Calu3 (cell line): ENCODE measurements at regions of chr1 and their contacts with region 1.

Region 1: DNA sequence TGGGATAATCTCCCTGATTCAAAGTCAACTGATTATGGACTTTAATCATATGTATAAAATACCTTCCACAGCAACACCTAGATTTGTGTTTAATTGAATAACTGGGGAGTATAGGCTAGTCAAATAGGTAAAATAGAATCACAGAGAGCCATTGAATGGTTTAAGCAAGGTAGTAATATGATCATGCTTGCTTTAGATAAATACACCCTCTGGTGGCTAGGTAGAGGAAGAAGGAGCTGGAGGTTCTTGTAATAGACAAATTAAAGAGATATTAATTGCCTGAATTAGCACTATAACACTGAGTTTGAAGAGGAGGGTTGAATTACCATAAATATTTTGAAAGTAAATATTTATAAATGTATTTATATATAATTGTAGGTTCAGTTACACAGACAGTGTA is 40.3 kb downstream of the DIRAS3 start:
- DNase-seq: no peak
- H3K4me3 Mint-ChIP-seq: no peak overlapping the region
- H3K27ac Mint-ChIP-seq: no peak overlapping the region
- H3K4me1 Mint-ChIP-seq: no peaks in the 10 kb centered on the region
- H3K27me3 Mint-ChIP-seq: no peaks in the 10 kb centered on the region
- CTCF ChIP-seq: no peak

Region 2: DNA sequence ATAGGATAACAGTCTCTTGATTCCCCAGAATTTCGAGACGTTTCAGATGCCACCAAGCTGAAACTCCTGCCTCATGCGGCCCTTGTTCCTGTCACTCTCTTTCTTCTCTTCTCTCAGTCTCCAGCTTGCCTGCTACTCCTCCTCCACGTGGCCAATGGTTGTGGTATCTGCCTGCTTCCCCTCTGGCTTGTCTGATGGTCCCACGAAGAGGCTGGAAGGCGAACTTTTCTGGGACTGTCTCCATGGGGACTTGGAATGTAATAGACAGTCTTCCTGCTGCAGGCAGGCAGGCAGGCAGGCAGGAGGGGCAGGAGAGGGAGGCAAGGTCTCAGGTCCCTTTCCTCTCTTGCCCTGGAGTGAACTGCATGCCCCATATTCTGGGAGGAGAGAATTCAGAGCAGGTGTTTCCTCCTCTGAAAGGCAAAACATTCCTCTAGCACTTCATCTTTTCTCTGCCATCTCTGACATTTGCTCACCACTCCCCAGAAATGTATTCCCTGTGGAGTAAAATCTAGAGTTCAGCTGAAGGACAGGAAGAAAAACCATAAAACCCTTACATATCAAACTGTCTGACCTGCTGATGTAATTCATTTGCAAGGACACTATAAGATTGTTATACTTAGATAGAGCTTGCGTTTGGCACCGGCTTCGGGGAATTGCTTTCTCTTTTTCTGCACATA is 112.7 kb before region 1 on chr1:
- CTCF ChIA-PET with region 1: interaction called, 6 read pairs
- intact Hi-C with region 1: loop called (anchors 1 kb)
- DNase-seq: peak; percentile 34
- H3K4me3 Mint-ChIP-seq: peak overlapping the region; percentile 60
- H3K27ac Mint-ChIP-seq: peak overlapping the region; percentile 90
- H3K4me1 Mint-ChIP-seq: peaks cover 32% of the 10 kb centered on the region
- H3K27me3 Mint-ChIP-seq: no peaks in the 10 kb centered on the region
- CTCF ChIP-seq: no peak

Region 3: GRCh38 chr1:67945733-67946374 is 64.2 kb before region 1 on chr1:
- CTCF ChIA-PET with region 1: no interaction called
- intact Hi-C with region 1: no loop called
- DNase-seq: no peak
- H3K4me3 Mint-ChIP-seq: no peak overlapping the region
- H3K27ac Mint-ChIP-seq: no peak overlapping the region
- H3K4me1 Mint-ChIP-seq: no peaks in the 10 kb centered on the region
- H3K27me3 Mint-ChIP-seq: no peaks in the 10 kb centered on the region
- CTCF ChIP-seq: no peak

Region 4: GRCh38 chr1:68111519-68112436 is 101.7 kb after region 1 on chr1:
- CTCF ChIA-PET with region 1: interaction called, 5 read pairs
- intact Hi-C with region 1: loop called (anchors 2 kb)
- DNase-seq: peak; percentile 59
- H3K4me3 Mint-ChIP-seq: no peak overlapping the region
- H3K27ac Mint-ChIP-seq: no peak overlapping the region
- H3K4me1 Mint-ChIP-seq: peaks cover 23% of the 10 kb centered on the region
- H3K27me3 Mint-ChIP-seq: no peaks in the 10 kb centered on the region
- CTCF ChIP-seq: peak; percentile 24

Region 5: GRCh38 chr1:68442822-68443556 is 432.9 kb after region 1 on chr1:
- CTCF ChIA-PET with region 1: no interaction called
- intact Hi-C with region 1: no loop called
- DNase-seq: peak; percentile 67
- H3K4me3 Mint-ChIP-seq: no peak overlapping the region
- H3K27ac Mint-ChIP-seq: no peak overlapping the region
- H3K4me1 Mint-ChIP-seq: peaks cover 24% of the 10 kb centered on the region
- H3K27me3 Mint-ChIP-seq: no peaks in the 10 kb centered on the region
- CTCF ChIP-seq: peak; percentile 41